Left cardiac atrium (tissue), 4 donors: ENCODE measurements at regions of chr4 and their contacts with region 1.

Region 1: DNA sequence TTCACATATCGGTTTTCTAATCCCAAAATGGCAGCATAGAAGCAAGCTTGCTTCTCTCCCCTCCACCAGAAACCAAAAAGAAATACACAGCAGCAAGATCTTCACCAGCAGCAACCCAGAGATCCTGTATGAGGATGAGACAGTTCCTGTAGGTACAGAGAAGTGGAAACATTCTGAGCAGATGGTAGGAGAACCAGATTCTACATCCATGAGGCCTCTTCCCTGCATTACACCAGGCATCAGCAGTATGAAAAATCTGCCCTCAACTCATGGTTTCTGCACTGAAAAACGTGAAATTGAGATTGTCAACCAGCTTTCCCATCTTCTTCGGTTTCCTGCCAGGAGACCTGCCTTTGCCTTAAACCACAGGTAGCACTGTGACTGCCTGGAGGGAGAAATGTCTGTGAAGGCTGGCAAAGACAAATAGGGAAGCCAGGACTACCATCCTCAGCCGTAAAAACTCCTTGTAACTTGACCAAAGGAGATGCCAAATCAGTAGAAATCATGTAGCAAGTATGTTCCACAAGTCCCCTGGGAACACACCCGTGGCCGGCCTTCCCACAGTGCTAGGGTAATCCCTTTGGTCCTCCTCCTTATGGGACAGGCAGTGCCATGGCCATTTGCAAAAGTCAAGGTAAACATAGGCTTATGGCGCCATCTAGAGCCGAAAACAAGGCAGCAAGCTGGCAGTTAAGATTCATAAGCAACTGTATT is 24.0 kb upstream of the MTHFD2L start:
- DNase-seq: peak; percentile 76
- ATAC-seq: peak; percentile 89

Region 2: DNA sequence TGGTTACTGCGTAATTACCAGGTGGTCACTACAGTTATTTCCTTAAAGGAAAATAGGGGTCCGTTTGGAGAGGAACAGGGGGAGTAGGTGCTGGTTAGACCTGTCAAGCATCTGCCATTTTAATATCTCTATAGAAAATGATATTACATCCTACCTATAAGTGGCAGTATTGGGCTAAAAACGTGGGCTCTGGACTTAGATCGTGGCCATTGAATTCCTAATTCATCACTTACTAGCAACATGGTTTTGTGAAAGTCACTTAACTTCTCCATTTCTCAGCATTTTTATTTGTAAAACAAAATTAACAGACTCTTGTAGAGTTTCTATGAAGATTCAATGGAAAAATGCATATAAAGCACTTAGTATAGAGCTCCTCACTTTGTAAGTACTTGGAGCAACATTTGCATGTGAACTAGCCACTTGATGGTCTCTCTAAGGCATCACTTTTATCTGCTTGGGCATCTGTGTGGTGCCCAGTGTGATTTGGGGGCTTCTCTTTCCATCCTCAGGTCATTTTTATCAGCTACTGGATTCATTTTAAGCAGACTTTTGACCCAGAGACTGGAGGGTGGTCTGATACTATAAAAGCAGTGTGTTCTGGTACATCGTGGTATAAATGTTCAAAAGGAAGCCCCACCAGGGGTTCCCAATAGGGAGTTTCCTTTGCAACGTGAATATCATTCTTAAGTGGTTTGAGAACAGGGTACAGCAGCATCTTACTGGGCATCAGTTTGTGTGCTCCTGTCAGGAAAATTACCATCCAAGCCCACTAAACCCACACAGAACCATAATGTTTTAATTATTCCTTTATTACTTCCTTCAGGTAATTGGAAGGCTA is 471.0 kb before region 1 on chr4:
- intact Hi-C with region 1: loop called in 1 of 2 experiments (anchors 2 kb)
- DNase-seq: no peak
- ATAC-seq: peak; percentile 34 to 60

Region 3: DNA sequence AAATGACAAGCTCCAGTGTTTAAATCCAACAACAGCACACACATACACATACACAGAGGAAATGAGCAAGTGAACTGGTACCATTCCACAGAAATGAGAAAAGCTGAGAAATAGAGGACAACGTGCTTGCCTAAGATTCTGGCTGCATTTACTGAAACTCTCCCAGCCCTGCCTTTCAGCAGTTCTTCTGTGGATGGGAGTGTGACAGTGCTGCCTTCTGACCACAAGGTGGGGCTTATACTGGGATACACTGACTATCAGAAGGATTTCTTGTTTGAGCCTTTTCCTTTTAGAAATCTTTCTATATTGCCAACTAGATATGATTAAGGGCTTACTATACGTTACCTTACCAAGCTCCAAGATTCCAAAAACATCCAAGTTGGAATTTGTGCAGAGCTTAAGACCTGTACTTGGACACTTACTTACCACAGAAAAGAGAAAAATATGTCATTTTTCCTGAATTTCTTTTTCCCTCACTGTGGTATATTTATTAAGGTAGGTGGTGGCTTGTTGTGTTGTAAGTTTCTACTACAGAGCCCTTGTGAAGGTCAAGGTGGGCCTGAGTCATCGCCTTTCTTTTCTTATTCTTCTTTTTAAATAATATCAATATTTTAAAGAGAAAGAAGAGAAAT is 404.3 kb before region 1 on chr4:
- intact Hi-C with region 1: loop called (anchors 5 kb)
- DNase-seq: peak; percentile 61
- ATAC-seq: peak; percentile 90 to 92

Region 4: GRCh38 chr4:74038161-74039064 is 95.5 kb before region 1 on chr4 and contains the start of gene CXCL3:
- intact Hi-C with region 1: loop called in 1 of 2 experiments (anchors 10 kb)
- DNase-seq: peak; percentile 90
- ATAC-seq: peak; percentile 92 to 97
- total RNA-seq, gene CXCL3: 0.88 to 1.8 TPM